Activated CD4-positive, alpha-beta T cell treated with anti-CD3 and anti-CD28 coated beads, Interleukin-2, amount 10 ng/mL, durations not matched to agents 24 days and 14 days (primary cell): ENCODE measurements at regions of chr6 and their contacts with region 1.

Region 1: GRCh38 chr6:157764178-157765033 is 58.6 kb upstream of the SNX9 start:
- DNase-seq: peak; percentile 95
- H3K4me3 Mint-ChIP-seq: peak overlapping the region; percentile 57
- H3K27ac Mint-ChIP-seq: peak overlapping the region; percentile 96
- H3K4me1 Mint-ChIP-seq: peaks cover 70% of the 10 kb centered on the region
- H3K27me3 Mint-ChIP-seq: peaks cover 6% of the 10 kb centered on the region

Region 2: DNA sequence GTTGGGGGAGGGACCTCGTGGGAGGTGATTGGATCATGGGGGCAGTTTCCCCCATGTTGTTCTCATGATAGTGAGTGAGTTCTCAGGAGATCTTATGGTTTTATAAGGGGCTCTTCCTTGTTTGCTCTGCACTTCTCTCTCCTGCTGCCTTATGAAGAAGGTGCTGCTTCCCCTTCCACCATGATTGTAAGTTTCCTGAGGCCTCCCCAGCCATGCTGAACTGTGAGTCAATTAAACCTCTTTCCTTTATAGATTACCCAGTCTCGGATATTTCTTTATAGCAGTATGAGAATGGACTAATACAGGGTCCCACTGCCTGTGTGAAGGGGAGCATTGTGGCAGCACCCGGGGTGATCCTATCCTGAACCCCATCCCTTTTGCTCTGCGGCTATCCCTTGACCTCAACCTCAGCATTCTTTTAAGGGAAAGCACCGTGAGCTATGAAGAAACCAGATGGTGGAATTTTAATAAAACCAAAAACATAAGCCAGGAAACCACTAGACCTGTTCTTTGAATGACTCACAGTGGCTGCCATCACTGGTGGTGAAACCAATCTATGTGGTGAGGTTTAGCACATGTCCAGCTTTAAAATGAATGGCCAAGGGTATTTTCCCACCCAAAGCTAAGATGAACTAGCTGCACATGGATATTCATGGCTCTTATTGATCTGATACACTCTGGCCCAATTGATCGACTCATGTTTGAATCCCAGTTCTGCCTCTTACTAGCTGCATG is 321.2 kb before region 1 on chr6:
- intact Hi-C with region 1: loop called (anchors 5 kb)
- DNase-seq: peak; percentile 67
- H3K4me3 Mint-ChIP-seq: no peak overlapping the region
- H3K27ac Mint-ChIP-seq: peak overlapping the region; percentile 74
- H3K4me1 Mint-ChIP-seq: peaks cover 19% of the 10 kb centered on the region
- H3K27me3 Mint-ChIP-seq: no peaks in the 10 kb centered on the region

Region 3: DNA sequence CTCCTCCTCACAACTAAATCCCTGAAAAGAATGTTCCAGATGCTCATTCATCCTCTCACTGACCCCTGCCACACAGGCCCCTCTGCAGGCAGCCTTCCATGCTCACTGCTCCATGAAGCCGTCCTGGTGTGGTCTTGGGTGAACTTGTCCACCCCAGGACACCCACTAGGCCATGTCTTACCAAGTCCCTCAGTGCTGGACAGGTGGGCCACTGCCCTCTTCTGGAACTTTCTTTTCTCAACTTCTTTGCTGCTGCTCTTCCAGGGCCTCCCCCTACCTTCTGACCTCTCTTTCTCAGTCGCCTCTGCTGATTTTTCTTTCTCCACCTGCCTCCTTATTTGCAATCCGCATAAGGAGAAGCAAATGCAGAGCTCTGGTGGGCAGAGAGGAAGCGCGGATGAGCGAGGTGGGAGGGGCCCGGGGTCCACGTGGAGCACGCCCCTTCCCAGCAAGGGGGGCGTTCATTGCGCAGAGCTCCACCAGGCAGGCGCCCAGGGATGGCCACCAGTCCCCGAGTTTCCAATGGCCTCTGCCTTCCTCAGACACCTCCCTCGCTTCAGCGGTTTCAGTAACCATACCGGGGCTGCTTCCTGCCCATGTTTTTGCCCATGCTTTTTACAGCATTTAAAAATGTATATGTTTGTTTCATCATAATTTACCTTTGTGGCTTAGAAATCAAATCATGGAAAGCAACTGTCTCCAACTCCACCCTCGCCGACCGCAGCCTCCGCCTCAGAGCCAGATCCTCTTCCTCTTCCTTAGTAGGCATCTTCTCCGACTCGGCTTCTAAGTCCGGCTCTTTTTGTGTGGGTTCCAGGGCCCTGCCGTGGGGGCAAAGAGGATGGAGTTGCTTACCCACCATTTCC is 253.8 kb before region 1 on chr6:
- intact Hi-C with region 1: no loop called
- DNase-seq: peak; percentile 78
- H3K4me3 Mint-ChIP-seq: peak overlapping the region; percentile 65
- H3K27ac Mint-ChIP-seq: peak overlapping the region; percentile 84
- H3K4me1 Mint-ChIP-seq: peaks cover 13% of the 10 kb centered on the region
- H3K27me3 Mint-ChIP-seq: no peaks in the 10 kb centered on the region

Region 4: DNA sequence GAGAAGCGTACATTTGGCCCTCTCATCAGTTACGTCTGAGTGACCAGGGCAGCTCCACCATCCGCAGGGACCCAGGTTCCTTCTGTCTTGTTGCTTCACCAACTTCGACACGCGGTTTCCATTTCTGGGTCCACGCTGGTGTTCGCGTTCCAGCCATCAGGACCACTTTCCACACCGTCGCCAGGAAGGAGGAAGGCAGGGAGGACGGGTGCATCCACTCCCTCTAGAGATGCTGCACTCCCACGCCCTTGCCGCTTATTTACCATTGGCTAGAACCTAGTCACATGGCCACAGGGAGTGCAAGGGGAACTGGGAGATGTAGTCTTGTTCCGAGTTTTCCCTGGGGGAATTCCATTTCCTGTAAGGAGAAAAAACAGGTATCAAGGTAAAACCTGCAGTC is 25.5 kb after region 1 on chr6:
- intact Hi-C with region 1: no loop called
- DNase-seq: peak; percentile 33
- H3K4me3 Mint-ChIP-seq: no peak overlapping the region
- H3K27ac Mint-ChIP-seq: no peak overlapping the region
- H3K4me1 Mint-ChIP-seq: peaks cover 7% of the 10 kb centered on the region
- H3K27me3 Mint-ChIP-seq: peaks cover 34% of the 10 kb centered on the region

Region 5: GRCh38 chr6:157800420-157801237 is 36.2 kb after region 1 on chr6:
- intact Hi-C with region 1: loop called (anchors 1 kb)
- DNase-seq: peak; percentile 77
- H3K4me3 Mint-ChIP-seq: peak overlapping the region; percentile 22
- H3K27ac Mint-ChIP-seq: peak overlapping the region; percentile 36
- H3K4me1 Mint-ChIP-seq: peaks cover 34% of the 10 kb centered on the region
- H3K27me3 Mint-ChIP-seq: peaks cover 34% of the 10 kb centered on the region

Region 6: DNA sequence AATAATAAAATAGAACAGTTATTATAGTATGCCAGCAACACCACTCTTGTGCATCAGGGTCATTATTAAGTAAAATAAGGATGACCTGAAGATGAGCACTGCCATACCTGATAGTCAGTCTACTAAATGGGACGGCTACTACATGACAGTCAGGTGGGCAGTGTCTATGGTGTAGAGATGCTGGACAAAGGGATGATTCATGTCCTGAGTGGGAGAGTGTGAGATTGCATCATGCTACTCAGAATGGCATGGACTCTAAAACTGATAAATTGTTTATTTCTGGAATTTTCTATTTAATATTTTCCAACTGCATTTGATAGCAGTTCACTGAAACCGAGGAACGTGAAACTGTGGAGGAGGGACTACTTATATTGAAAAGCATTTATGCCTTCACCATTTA is 97.4 kb after region 1 on chr6:
- intact Hi-C with region 1: loop called (anchors 1 kb)
- DNase-seq: no peak
- H3K4me3 Mint-ChIP-seq: no peak overlapping the region
- H3K27ac Mint-ChIP-seq: no peak overlapping the region
- H3K4me1 Mint-ChIP-seq: peaks cover 42% of the 10 kb centered on the region
- H3K27me3 Mint-ChIP-seq: peaks cover 35% of the 10 kb centered on the region

Region 7: DNA sequence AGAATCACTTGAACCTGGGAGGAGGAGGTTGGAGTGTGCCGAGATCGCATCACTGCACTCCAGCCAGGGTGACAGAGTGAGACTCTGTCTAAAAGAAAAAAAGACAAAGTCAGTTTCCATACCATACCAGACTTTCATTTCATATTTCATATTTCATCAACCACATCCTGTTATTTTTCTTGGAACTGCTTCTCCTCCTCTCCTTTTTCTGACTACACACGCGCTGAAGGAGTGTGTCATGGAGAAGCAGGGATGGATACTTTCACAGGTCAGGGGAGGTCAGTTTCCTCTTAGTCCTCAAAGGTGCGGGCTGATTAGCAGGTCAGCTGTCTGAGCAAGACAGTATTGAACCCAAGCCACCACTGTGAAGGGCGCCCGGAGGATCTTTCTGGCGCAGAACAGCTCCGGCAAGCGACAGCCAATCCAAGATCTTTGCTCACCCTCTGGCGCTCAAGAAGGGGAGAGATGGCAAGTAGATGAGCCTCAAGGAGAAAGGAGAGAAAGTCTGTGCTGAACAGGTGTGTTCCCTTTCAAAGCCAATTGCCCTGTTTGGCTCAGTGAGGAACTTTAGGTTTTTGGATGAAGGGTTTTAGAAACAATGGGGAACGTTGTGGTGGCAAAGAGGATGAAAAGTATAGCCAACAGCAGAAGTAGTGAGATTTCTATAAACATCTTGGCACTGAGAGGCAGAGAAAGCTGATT is 198.3 kb after region 1 on chr6:
- intact Hi-C with region 1: loop called (anchors 5 kb)
- DNase-seq: peak; percentile 80
- H3K4me3 Mint-ChIP-seq: peak overlapping the region; percentile 80
- H3K27ac Mint-ChIP-seq: peak overlapping the region; percentile 95
- H3K4me1 Mint-ChIP-seq: peaks cover 29% of the 10 kb centered on the region
- H3K27me3 Mint-ChIP-seq: no peaks in the 10 kb centered on the region

Region 8: GRCh38 chr6:158057213-158057987 is 293.0 kb after region 1 on chr6:
- intact Hi-C with region 1: loop called (anchors 5 kb)
- DNase-seq: no peak
- H3K4me3 Mint-ChIP-seq: peak overlapping the region; percentile 1
- H3K27ac Mint-ChIP-seq: no peak overlapping the region
- H3K4me1 Mint-ChIP-seq: peaks cover 37% of the 10 kb centered on the region
- H3K27me3 Mint-ChIP-seq: no peaks in the 10 kb centered on the region

Region 9: GRCh38 chr6:158185729-158186456 is 421.5 kb after region 1 on chr6:
- intact Hi-C with region 1: no loop called
- DNase-seq: no peak
- H3K4me3 Mint-ChIP-seq: no peak overlapping the region
- H3K27ac Mint-ChIP-seq: peak overlapping the region; percentile 50
- H3K4me1 Mint-ChIP-seq: peaks cover 29% of the 10 kb centered on the region
- H3K27me3 Mint-ChIP-seq: no peaks in the 10 kb centered on the region

Region 10: DNA sequence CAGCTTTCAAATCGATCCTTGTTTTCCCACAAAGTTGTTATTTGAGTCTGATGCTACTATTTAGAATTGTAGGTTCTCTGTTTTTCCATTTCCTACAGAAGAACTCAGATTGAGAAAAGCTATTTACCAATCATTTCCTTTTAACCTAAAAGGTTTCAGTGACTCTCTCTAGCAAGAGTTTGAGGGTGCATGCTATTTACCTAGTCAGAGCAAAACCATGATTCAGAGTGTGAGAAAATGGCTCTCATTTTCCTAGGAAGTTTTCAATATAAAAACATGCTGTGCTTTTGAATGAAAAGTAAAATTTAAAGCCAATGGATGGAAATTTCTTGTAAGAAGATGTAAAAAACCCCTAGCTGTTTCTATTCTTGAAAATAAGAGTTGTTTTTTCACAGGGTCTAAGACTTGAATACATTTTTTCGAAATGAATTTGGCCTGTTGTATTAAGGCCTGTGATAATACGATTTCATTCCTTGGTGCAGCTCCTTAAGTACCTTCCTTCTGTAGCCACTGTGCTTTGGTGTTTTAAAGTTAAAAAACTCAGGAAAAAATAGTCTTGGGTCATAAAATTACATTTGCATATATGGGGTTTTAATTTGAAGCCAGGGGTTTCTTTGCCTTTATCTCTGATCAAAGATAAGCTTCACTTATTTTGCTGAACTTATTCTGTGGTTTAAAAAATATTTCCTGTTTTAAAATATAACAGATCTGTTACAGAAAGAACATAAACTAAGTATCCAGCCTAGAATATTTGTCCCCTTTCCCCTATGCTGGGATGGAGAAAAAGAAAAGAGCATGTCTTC is 1253.6 kb after region 1 on chr6:
- intact Hi-C with region 1: loop called (anchors 2 kb)
- DNase-seq: no peak
- H3K4me3 Mint-ChIP-seq: peak overlapping the region; percentile 45
- H3K27ac Mint-ChIP-seq: peak overlapping the region; percentile 79
- H3K4me1 Mint-ChIP-seq: peaks cover 42% of the 10 kb centered on the region
- H3K27me3 Mint-ChIP-seq: no peaks in the 10 kb centered on the region